Calu3 (cell line): ENCODE measurements at regions of chr3 and their contacts with region 1.

Region 1: GRCh38 chr3:128456776-128457715 is 9.6 kb downstream of the DNAJB8 start:
- DNase-seq: no peak
- H3K4me3 Mint-ChIP-seq: no peak overlapping the region
- H3K27ac Mint-ChIP-seq: no peak overlapping the region
- H3K4me1 Mint-ChIP-seq: no peaks in the 10 kb centered on the region
- H3K27me3 Mint-ChIP-seq: peaks cover 97% of the 10 kb centered on the region
- CTCF ChIP-seq: no peak

Region 2: DNA sequence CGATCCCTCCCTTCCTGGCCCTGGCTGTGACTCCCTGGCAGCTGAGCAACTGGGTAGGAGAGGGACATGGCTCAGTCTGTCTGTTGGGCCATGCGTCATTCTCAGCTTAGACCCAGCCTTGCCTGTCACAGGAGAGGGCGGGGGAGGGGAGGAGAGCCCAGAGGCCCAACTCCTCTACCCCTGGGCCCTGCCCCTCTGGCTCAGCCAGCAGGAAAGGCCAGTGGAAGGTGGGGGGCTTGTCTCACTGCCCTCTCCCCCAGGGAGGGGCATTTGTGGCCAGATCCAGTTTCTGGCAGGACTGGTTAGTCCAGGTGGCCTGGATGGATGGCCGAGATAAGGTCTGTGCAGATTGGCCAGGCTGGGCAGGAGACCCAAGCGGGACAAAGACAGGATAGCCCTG is 22.0 kb before region 1 on chr3:
- CTCF ChIA-PET with region 1: interaction called, 10 read pairs
- intact Hi-C with region 1: no loop called
- DNase-seq: peak; percentile 96
- H3K4me3 Mint-ChIP-seq: no peak overlapping the region
- H3K27ac Mint-ChIP-seq: no peak overlapping the region
- H3K4me1 Mint-ChIP-seq: peaks cover 27% of the 10 kb centered on the region
- H3K27me3 Mint-ChIP-seq: peaks cover 45% of the 10 kb centered on the region
- CTCF ChIP-seq: no peak

Region 3: GRCh38 chr3:128497387-128498126 is 40.5 kb after region 1 on chr3:
- CTCF ChIA-PET with region 1: no interaction called
- intact Hi-C with region 1: no loop called
- DNase-seq: peak; percentile 90
- H3K4me3 Mint-ChIP-seq: peak overlapping the region; percentile 70
- H3K27ac Mint-ChIP-seq: no peak overlapping the region
- H3K4me1 Mint-ChIP-seq: peaks cover 13% of the 10 kb centered on the region
- H3K27me3 Mint-ChIP-seq: no peaks in the 10 kb centered on the region
- CTCF ChIP-seq: peak; percentile 98